T-cell (primary cell): ENCODE measurements at regions of chr15 and their contacts with region 1.

Region 1: DNA sequence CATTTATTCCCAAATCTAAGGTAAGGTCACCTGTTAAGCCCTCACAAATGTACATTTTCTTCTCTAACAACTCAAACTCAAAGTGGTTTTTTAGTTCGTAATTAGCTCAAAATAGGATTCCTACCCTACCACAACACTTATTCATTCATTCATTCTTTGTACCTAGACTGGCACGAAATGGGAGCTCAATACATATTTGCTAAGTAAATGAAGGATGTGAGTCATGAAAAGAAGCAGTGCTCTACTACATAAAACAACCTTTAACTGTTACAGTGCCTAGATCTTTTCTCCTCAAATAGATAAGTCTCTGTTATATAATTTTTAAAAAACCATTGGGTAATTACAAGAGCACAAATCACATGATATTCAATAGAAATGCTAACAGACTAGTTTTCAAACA is 13.1 kb downstream of the RSL24D1 start:
- DNase-seq: no peak
- ATAC-seq: no peak
- H3K4me3 ChIP-seq: no peak overlapping the region
- H3K4me3 Mint-ChIP-seq: no peak overlapping the region
- H3K27ac ChIP-seq: no peak overlapping the region
- H3K27ac Mint-ChIP-seq: no peak overlapping the region
- H3K4me1 ChIP-seq: no peaks in the 10 kb centered on the region
- H3K4me1 Mint-ChIP-seq: peaks cover 29 to 36% (median 34%) of the 10 kb centered on the region in 3 donors
- H3K27me3 ChIP-seq: no peaks in the 10 kb centered on the region
- H3K27me3 Mint-ChIP-seq: no peaks in the 10 kb centered on the region

Region 2: GRCh38 chr15:55928955-55929354 is 745.3 kb after region 1 on chr15:
- CTCF ChIA-PET with region 1: no interaction called
- POLR2A ChIA-PET with region 1: interaction called in 1 of 2 experiments, 10 read pairs
- DNase-seq: no peak
- ATAC-seq: no peak
- H3K4me3 ChIP-seq: no peak overlapping the region
- H3K4me3 Mint-ChIP-seq: no peak overlapping the region
- H3K27ac ChIP-seq: no peak overlapping the region
- H3K27ac Mint-ChIP-seq: no peak overlapping the region
- H3K4me1 ChIP-seq: no peaks in the 10 kb centered on the region
- H3K4me1 Mint-ChIP-seq: no peaks in the 10 kb centered on the region
- H3K27me3 ChIP-seq: no peaks in the 10 kb centered on the region
- H3K27me3 Mint-ChIP-seq: no peaks in the 10 kb centered on the region